Ascending aorta (tissue), 2 donors: ENCODE measurements at regions of chr19 and their contacts with region 1.

Region 1: GRCh38 chr19:47273313-47273977 is 1.2 kb upstream of the INAFM1 start:
- DNase-seq: peak; percentile 77 to 97
- H3K4me3 ChIP-seq: peak overlapping the region; percentile 77 to 87
- H3K27ac ChIP-seq: peak overlapping the region; percentile 99
- H3K4me1 ChIP-seq: peaks cover 7 to 32% of the 10 kb centered on the region in 2 donors
- H3K27me3 ChIP-seq: no peaks in the 10 kb centered on the region
- CTCF ChIP-seq: no peak

Region 2: DNA sequence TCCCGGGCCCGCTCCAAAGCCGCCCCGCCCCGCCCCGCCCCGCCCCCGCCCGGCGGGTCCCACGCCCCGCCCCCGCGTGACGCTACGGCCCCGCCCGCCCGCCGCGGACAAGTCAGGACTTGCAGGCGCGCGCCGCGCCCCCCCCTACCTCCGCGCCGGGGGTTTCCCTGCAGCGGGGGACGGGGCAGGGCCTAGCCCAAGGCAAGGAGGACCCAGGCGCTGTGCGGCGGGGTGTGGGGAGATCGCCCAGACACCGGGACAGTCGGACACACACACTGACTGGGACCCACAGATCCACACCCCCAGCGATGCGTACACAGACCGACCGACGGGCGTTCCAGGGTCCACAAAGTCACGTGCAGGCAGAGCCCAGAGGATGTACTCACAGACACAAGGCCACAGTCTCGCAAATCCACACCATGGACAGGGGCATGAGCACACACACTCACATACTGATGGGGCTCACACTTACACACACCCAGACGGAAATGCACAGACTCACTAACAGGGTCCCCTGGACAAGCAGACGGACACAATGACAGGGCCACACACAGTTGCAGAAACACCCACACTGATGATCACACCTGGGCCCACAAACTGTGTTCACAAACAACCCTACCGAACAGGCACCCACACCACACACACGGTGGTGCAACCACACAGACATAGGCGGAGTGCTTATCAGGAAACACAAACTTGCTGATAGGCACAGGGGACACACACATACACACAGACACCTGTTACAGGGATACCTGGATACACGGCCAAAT is 42.0 kb before region 1 on chr19:
- intact Hi-C with region 1: loop called (anchors 2 kb)
- DNase-seq: peak; percentile 82 to 96
- H3K4me3 ChIP-seq: peak overlapping the region; percentile 88 to 91
- H3K27ac ChIP-seq: peak overlapping the region; percentile 79 to 100
- H3K4me1 ChIP-seq: peaks cover 15 to 22% of the 10 kb centered on the region in 2 donors
- H3K27me3 ChIP-seq: no peaks in the 10 kb centered on the region
- CTCF ChIP-seq: no peak

Region 3: DNA sequence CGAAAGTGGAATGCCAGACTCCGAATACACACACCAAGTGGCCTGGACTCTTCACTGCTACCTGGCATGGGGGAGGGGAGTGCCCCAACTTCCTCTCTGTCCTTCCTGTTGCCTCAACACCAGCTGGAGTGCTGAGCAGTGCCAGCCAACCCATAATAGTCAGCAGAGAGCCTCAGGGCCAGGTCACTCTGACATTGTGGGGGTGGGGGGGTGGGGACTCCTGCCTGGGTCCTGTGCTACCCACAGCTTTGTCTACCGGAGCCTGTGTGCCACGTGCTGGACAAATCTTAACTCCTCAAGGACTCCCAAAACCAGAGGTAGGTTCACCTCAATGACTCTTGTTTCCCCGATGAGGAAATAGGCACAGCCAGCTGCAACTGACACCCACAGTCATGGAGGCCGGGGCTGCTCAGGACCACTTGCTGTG is 63.4 kb after region 1 on chr19:
- intact Hi-C with region 1: no loop called
- DNase-seq: peak; percentile 40 to 71
- H3K4me3 ChIP-seq: no peak overlapping the region
- H3K27ac ChIP-seq: no peak overlapping the region
- H3K4me1 ChIP-seq: no peaks in the 10 kb centered on the region
- H3K27me3 ChIP-seq: no peaks in the 10 kb centered on the region
- CTCF ChIP-seq: no peak